ENCODE measurements at regions of chr22 and their contacts with region 1.

Region 1: DNA sequence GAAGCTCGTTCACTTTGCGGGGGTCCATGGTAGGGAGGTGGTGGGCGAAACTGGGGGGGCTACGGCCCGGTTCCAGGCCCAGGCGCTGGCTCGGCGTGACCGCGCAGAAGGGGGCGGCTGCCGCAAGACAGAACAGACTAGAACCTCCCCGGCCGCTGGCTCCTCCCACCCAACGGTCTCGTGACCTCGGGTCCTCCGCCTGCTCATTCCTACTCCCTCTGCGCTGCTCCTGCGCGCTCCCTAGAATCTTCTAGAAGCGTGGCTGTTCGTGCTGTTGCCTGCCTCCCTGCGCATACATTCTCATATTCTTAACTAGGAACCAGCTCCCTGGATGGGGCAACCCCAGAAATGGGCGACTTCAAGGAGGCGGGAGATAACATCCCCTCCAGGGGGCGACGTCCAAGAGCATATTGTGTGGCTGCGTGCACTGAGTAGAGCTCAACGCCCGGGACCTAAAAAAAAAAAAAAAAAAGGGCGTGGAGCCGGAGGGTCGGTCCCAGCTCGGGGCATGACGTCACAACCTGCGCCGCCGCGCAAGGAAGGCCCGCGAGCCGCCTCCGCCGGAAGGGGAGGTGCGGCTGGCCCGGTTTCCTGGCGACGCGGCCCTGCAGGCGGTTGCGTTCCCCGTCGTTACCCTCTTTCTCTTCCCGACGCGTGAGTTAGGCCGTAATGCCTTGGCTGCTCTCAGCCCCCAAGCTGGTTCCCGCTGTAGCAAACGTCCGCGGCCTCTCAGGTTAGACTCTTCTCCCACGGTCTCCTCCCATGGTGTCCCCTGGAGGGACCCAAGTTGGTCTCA is at the starts of genes ST13 and XPNPEP3:
- DNase-seq: peak; percentile 97
- H3K4me3 Mint-ChIP-seq: peak within 1 kb of the TSS; percentile 95
- H3K27ac Mint-ChIP-seq: peak within 1 kb of the TSS; percentile 99
- H3K4me1 Mint-ChIP-seq: peaks cover 50% of the 10 kb centered on the region
- H3K27me3 Mint-ChIP-seq: no peaks in the 10 kb centered on the region
- total RNA-seq, gene ST13: 138 to 142 TPM
- total RNA-seq, gene XPNPEP3: 11.3 to 13.2 TPM

Region 2: DNA sequence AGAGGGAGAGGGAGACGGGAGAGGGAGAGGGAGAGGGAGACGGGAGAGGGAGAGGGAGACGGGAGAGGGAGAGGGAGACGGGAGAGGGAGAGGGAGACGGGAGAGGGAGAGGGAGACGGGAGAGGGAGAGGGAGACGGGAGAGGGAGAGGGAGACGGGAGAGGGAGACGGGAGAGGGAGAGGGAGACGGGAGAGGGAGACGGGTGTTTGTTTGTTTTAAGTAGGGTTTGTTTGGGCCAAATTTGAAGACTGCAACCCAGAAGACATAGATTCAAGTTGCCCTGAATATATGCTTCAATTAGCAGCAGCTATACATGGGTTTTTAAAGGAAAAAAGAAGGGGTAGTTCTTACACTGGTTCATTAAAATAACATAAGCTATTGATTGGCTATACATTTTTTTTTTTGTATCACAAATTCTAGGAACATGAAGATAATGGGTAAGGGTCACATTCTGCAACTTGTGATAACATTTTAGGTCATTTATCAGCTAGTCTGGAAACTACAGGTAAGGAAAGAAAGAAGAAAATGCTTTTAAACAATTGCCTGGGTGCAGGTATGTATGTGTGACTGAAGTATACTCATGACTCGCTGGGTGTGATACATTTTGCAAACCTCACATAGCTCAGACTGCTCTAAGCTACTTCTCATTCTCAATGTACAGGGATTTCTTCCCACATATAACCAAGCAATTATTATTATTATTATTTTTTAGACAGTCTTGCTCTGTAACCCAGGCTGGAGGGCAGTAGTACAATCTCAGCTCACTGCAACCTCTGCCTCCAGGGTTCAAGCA is 110.1 kb before region 1 on chr22:
- CTCF ChIA-PET with region 1: no interaction called
- POLR2A ChIA-PET with region 1: no interaction called
- DNase-seq: no peak
- H3K4me3 Mint-ChIP-seq: no peak overlapping the region
- H3K27ac Mint-ChIP-seq: no peak overlapping the region
- H3K4me1 Mint-ChIP-seq: no peaks in the 10 kb centered on the region
- H3K27me3 Mint-ChIP-seq: peaks cover 3% of the 10 kb centered on the region

Region 3: DNA sequence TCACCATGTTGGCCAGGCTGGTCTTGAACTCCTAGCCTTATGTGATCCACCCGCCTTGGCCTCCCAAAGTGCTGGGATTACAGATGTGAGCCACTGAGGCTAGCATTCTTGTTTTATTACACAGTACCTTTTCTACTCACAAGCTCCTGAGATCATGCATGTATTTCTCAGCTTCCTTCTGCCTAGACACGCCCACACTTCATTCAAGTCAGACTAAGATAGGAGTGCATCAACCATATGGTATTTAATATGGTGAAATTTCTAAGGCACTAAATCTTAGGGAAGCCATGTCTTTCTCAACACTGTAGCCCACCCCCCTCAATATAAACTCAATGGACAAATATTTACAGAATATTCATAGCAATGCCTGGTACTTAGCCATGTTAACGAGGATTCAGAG is 99.6 kb before region 1 on chr22:
- CTCF ChIA-PET with region 1: no interaction called
- POLR2A ChIA-PET with region 1: no interaction called
- DNase-seq: no peak
- H3K4me3 Mint-ChIP-seq: no peak overlapping the region
- H3K27ac Mint-ChIP-seq: no peak overlapping the region
- H3K4me1 Mint-ChIP-seq: no peaks in the 10 kb centered on the region
- H3K27me3 Mint-ChIP-seq: peaks cover under 1% of the 10 kb centered on the region

Region 4: GRCh38 chr22:40818747-40819598 is 37.7 kb before region 1 on chr22 and contains the start of gene SLC25A17:
- CTCF ChIA-PET with region 1: interaction called, 4 read pairs
- POLR2A ChIA-PET with region 1: interaction called, 31 read pairs
- DNase-seq: peak; percentile 90
- H3K4me3 Mint-ChIP-seq: peak within 1 kb of the TSS; percentile 91
- H3K27ac Mint-ChIP-seq: peak within 1 kb of the TSS; percentile 88
- H3K4me1 Mint-ChIP-seq: peaks cover 32% of the 10 kb centered on the region
- H3K27me3 Mint-ChIP-seq: no peaks in the 10 kb centered on the region
- total RNA-seq, gene SLC25A17: 17.1 to 17.5 TPM

Region 5: GRCh38 chr22:40867109-40867508 is 10.4 kb after region 1 on chr22:
- CTCF ChIA-PET with region 1: interaction called, 11 read pairs
- POLR2A ChIA-PET with region 1: interaction called, 12 read pairs
- DNase-seq: no peak
- H3K4me3 Mint-ChIP-seq: no peak overlapping the region
- H3K27ac Mint-ChIP-seq: no peak overlapping the region
- H3K4me1 Mint-ChIP-seq: peaks cover 13% of the 10 kb centered on the region
- H3K27me3 Mint-ChIP-seq: no peaks in the 10 kb centered on the region